ENCODE measurements at regions of chr10 and their contacts with region 1.

Region 1: DNA sequence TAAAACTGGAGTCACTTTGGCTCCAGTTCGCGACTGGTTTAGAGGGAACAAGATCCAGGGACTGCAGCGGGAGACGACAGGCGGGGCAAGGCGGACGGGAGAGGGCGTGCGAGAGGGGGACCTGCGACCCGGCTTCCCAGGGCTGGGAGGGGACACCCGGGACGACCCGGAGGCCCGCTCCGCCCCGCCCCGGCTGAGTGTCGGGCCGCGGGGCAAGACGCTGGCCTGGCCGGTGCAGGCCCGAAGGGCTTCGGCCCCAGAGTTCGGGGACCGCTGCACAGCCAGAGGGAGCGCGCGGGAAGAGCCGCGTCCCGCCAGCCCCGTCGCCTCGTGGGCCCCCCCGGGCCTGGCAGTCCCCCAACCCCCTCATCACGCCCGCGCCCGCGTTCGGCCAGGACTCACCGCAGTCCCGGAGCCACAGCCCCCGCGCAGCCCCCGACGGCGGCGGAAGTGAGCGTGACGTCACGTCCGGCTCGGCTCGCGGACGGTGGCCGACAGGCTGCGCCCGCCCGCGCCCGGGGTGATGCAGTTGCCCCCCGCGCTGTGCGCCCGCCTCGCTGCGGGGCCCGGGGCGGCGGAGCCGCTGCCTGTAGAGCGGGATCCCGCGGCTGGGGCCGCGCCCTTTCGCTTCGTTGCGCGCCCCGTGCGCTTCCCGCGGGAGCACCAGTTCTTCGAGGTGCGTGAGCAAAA is at the starts of genes TUBGCP2 and ZNF511:
- DNase-seq: peak; percentile 89
- H3K4me3 Mint-ChIP-seq: peak within 1 kb of the TSS; percentile 96
- H3K27ac Mint-ChIP-seq: peak within 1 kb of the TSS; percentile 99
- H3K4me1 Mint-ChIP-seq: peaks cover 31% of the 10 kb centered on the region
- H3K27me3 Mint-ChIP-seq: no peaks in the 10 kb centered on the region

Region 2: GRCh38 chr10:133173860-133174640 is 134.5 kb before region 1 on chr10:
- CTCF ChIA-PET with region 1: no interaction called
- DNase-seq: no peak
- H3K4me3 Mint-ChIP-seq: no peak overlapping the region
- H3K27ac Mint-ChIP-seq: no peak overlapping the region
- H3K4me1 Mint-ChIP-seq: no peaks in the 10 kb centered on the region
- H3K27me3 Mint-ChIP-seq: peaks cover 8% of the 10 kb centered on the region

Region 3: DNA sequence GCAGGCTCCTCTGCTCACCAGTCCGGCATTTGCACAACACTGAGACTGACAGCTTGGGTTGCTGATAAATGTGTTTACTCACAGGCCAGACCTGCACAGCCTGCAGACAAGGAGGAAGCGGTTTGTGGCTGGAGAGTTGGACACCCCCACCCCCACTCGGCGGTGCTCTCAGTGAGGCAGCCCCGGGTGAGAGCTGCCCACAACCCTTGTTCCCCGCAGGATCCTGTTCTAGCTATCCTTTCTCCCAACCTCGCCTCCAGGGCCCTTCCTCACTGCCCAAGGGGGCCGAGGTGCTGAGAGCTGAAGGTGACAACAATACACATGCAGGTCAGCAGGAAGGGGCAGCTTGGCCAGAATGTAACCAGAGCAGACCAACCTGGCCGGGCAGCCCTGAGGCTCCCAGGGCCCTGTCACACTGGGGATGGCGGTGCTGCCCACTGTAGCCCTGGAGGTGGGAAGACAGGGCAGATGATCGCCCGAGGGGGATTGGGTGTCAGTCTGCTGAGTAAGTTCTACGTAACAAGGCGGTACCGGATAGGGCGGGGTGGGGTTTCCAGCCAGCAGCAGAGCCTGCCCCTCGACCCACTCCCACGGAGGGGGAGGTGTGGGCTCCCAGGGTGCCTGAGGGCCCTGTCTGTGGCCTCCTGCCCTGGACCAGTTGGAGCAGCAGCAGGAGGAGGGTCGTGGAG is 29.8 kb before region 1 on chr10:
- CTCF ChIA-PET with region 1: interaction called, 11 read pairs
- DNase-seq: peak; percentile 67
- H3K4me3 Mint-ChIP-seq: peak overlapping the region; percentile 70
- H3K27ac Mint-ChIP-seq: peak overlapping the region; percentile 95
- H3K4me1 Mint-ChIP-seq: peaks cover 41% of the 10 kb centered on the region
- H3K27me3 Mint-ChIP-seq: no peaks in the 10 kb centered on the region

Measured in activated naive CD4-positive, alpha-beta T cell treated with anti-CD3 and anti-CD28 coated beads, Interleukin-2, amount 10 ng/mL, durations not matched to agents 7 days and 5 days (primary cell).